Cardiac septum (tissue), 1 donor: ENCODE measurements at regions of chr1 and their contacts with region 1.

Region 1: GRCh38 chr1:240190881-240191401 is 99.3 kb downstream of the FMN2 start:
- DNase-seq: no peak

Region 2: GRCh38 chr1:240169188-240169587 is 21.8 kb before region 1 on chr1:
- intact Hi-C with region 1: no loop called
- DNase-seq: no peak

Region 3: DNA sequence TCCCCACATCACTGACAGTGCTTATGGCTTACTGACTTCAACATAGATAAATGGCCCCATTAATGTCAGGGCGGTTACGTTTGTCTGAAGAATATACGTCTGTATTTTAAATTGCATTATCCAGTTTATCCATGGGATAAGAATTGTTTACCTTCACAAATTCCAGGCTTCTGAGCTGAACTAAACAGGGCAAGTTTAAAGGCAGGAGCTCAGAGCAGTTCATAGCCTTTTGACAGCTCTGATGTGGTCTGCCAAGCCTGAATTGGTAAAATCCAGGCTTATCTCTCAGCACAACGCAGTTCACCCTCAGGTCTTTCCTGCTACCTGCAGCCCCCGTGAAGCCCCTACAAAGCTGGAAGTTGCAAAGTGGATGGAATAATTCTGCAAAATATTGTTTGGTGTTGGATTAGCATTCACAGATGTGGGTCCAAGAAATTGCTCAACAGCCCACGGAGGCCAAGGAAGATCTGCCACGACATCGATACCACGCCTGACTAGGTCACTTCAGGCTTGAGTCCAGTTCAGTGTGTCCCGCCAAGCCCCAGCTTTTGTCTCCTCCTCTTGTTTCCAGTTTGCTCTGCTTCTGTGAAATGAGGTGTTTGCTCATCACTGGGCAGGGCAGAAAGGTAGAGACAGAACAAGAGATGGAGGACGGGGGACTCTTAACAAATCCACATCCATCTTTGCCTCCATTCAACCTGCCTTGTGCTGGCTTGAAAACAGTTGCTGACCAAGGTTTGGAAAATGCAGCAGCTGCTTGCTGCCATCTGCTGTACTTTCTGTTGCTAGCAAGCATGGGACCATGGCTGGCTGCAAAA is 500.8 kb after region 1 on chr1:
- intact Hi-C with region 1: loop called (anchors 10 kb)
- DNase-seq: no peak